ENCODE measurements at regions of chr5 and their contacts with region 1.

Region 1: DNA sequence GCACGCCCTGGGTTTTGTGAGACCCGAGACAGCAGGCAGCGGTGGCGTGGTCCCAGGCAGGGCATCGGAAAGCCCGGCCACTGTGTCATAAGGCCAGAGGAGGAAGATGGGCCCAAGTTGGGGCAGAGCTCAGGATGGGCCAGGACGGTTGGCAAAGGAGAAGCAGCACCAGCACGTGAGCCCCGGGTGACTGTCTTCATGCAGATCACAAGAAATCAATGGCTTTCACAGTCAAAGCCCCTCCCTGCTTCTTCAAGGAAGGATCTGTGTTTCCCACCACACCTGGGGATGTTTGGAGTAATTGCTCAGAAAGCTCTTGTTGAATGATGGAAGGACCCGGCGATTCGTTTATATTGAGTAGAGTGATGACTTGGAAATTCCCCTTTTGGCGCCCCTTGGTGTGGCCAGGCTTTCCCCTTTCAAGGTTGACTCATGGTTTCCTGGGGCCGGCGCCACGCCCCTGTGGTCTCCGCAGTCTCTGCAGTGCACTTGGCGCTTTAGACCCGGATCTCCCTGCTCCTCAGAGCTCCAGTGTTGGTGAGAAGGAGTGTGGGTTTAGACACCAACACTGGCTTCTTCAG is 52.1 kb downstream of the IL31RA start:
- DNase-seq: peak; percentile 70
- ATAC-seq: peak; percentile 92
- H3K4me3 ChIP-seq: peak overlapping the region; percentile 5; the same call in 1 of the 2 replicates
- H3K27ac ChIP-seq: peak overlapping the region; percentile 40
- H3K4me1 ChIP-seq: peaks cover 16% of the 10 kb centered on the region
- H3K27me3 ChIP-seq: no peaks in the 10 kb centered on the region
- CTCF ChIP-seq: no peak
- EP300 ChIP-seq: peak; percentile 62 to 69; a peak in 2 of 4 replicates
- POLR2A ChIP-seq: no peak
- RAD21 ChIP-seq: no peak

Region 2: DNA sequence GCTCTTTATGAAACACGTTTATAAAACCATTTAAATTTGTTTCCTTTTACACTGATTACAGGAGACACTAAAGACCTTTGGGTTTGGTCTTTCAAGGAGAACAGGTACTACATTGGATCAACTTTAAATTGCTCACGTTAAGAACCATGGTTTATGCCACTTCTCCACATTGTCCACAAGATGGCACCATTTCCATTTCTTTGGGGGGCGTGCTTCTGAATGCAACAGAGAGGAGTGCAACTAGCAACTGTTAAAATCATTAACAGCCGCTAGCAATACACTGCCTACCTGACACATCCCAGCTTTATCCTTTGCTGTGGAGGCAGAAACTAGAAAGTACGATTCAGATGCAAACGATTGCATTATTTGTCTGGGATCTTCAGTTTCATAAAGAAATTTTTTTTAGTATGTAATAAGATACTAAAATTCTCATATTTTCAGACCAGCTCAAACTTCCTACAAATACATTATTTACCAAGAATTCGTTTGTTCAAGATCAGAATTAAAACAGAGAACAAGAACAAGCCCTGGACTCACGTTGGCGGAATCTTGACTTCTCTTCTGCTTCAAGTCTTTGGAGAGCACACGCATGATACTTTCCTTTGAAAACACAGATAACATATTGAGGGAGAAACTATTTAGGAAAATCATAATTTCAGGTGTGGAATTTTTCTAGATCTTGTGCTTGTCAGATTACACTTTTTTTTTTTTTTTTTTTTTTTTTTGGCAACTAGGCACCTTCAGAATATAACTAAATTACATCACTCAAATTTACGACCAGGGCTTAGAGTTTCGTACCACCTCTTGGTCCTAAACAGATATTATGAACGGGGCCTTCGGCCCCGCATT is 730.9 kb before region 1 on chr5:
- CTCF ChIA-PET with region 1: no interaction called
- POLR2A ChIA-PET with region 1: no interaction called
- RAD21 ChIA-PET with region 1: no interaction called
- SMC1A ChIA-PET with region 1: no interaction called
- in situ Hi-C with region 1: no loop called
- intact Hi-C with region 1: loop called (anchors 10 kb)
- DNase-seq: peak; percentile 45
- ATAC-seq: peak; percentile 84
- H3K4me3 ChIP-seq: peak overlapping the region; percentile 69
- H3K27ac ChIP-seq: no peak overlapping the region
- H3K4me1 ChIP-seq: peaks cover 9% of the 10 kb centered on the region
- H3K27me3 ChIP-seq: peaks cover 3 to 22% of the 10 kb centered on the region in 2 experiments; a peak in 3 of 4 replicates
- CTCF ChIP-seq: peak; percentile 60 to 89 (median 82); a peak in 5 of 6 replicates
- EP300 ChIP-seq: no peak
- POLR2A ChIP-seq: no peak
- RAD21 ChIP-seq: peak; percentile 92

Region 3: DNA sequence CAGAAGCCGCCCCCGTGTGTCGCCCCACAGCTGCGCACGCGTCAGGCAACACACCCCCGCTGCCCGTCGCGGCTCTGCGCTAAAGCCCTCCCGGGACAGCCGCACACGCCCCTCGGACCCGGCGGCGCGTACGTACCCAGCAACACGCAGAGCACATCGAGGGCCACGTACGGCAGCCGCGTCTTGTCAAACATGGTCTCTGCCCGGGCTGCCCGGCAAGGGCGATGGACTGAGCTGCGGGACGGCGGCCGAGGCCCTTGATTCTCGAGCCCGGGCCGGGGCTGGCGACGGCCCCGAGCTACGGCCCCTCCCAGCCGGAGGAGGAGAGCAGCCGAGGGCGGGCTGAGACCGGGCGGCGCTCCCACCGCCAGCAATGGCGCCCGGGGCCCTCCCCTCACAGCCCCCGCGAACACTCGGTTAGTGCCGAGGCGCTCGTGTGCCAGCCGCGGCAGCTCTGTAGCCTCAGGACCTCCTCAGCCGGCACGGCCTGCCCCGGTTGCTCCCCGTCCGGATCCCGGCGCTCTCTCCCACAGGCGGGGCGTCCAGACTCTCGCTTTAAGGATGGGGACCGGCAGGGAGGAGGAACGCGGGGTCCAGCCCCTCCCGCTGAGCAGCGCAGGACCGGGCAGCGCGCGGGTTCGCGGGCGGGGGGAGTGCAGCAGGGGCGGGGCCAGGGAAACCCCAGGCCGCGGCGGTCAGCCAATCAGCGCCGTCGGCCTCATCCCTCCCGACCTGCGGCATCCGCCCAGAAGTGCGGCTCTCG is 368.6 kb before region 1 on chr5 and contains the start of gene PLPP1:
- CTCF ChIA-PET with region 1: no interaction called
- POLR2A ChIA-PET with region 1: no interaction called
- RAD21 ChIA-PET with region 1: no interaction called
- SMC1A ChIA-PET with region 1: no interaction called
- in situ Hi-C with region 1: no loop called
- intact Hi-C with region 1: loop called (anchors 10 kb)
- DNase-seq: peak; percentile 38
- ATAC-seq: peak; percentile 89
- H3K4me3 ChIP-seq: peak within 1 kb of the TSS; percentile 80
- H3K27ac ChIP-seq: peak within 1 kb of the TSS; percentile 66
- H3K4me1 ChIP-seq: peaks cover 12% of the 10 kb centered on the region
- H3K27me3 ChIP-seq: no peaks in the 10 kb centered on the region
- CTCF ChIP-seq: no peak
- EP300 ChIP-seq: no peak
- POLR2A ChIP-seq: peak; percentile 78
- RAD21 ChIP-seq: no peak
- polyA plus RNA-seq, gene PLPP1: 3.0 TPM

Region 4: GRCh38 chr5:55711968-55712859 is 191.0 kb before region 1 on chr5 and contains the start of gene SLC38A9:
- CTCF ChIA-PET with region 1: no interaction called
- POLR2A ChIA-PET with region 1: no interaction called
- RAD21 ChIA-PET with region 1: no interaction called
- SMC1A ChIA-PET with region 1: no interaction called
- in situ Hi-C with region 1: no loop called
- intact Hi-C with region 1: loop called (anchors 5 kb)
- DNase-seq: peak; percentile 68
- ATAC-seq: peak; percentile 99
- H3K4me3 ChIP-seq: peak within 1 kb of the TSS; percentile 83
- H3K27ac ChIP-seq: peak within 1 kb of the TSS; percentile 51
- H3K4me1 ChIP-seq: peaks cover 4% of the 10 kb centered on the region; the same call in 1 of the 2 replicates
- H3K27me3 ChIP-seq: no peaks in the 10 kb centered on the region
- CTCF ChIP-seq: no peak
- EP300 ChIP-seq: no peak
- POLR2A ChIP-seq: peak; percentile 80
- RAD21 ChIP-seq: no peak
- polyA plus RNA-seq, gene SLC38A9: 8.5 to 17.4 TPM

Region 5: DNA sequence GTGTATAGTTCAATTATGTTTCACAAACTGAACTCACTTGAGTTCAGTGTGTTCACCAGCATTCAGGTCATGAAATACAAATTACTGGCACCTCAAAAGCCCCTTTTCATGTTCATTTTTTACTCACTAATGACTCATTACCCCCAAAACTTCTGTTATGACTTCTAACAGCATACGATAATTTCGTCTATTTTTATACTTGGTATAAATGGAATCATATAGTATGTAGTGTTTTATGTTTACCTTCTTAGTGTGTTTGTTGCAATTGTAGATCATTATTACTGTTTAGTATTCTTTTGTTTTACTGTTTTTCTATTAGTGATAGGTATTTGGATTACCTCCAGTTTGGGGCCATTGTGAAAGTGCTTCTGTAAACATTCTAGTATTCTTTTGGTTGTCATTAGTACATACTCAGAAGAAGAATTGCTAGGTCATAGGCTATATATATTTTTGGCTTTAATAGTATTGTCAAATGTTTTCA is 132.0 kb before region 1 on chr5:
- CTCF ChIA-PET with region 1: no interaction called
- POLR2A ChIA-PET with region 1: interaction called, 4 read pairs
- RAD21 ChIA-PET with region 1: interaction called, 4 read pairs
- SMC1A ChIA-PET with region 1: no interaction called
- in situ Hi-C with region 1: no loop called
- intact Hi-C with region 1: loop called (anchors 5 kb)
- DNase-seq: no peak
- ATAC-seq: peak; percentile 88
- H3K4me3 ChIP-seq: no peak overlapping the region
- H3K27ac ChIP-seq: no peak overlapping the region
- H3K4me1 ChIP-seq: peaks cover 3% of the 10 kb centered on the region; the same call in 1 of the 2 replicates
- H3K27me3 ChIP-seq: no peaks in the 10 kb centered on the region
- CTCF ChIP-seq: no peak
- EP300 ChIP-seq: peak; percentile 35 to 53; a peak in 2 of 4 replicates
- POLR2A ChIP-seq: no peak
- RAD21 ChIP-seq: no peak

Region 6: GRCh38 chr5:55913466-55914413 is 10.5 kb after region 1 on chr5:
- CTCF ChIA-PET with region 1: interaction called, 7 read pairs
- POLR2A ChIA-PET with region 1: interaction called, 13 read pairs
- RAD21 ChIA-PET with region 1: interaction called, 24 read pairs
- SMC1A ChIA-PET with region 1: interaction called, 41 read pairs
- in situ Hi-C with region 1: no loop called
- intact Hi-C with region 1: no loop called
- DNase-seq: no peak
- ATAC-seq: peak; percentile 95
- H3K4me3 ChIP-seq: no peak overlapping the region
- H3K27ac ChIP-seq: no peak overlapping the region
- H3K4me1 ChIP-seq: no peaks in the 10 kb centered on the region
- H3K27me3 ChIP-seq: 0 out of 4 replicates have a peak, but pooled peaks cover 0 to 2% of the 10 kb centered on the region in 2 experiments
- CTCF ChIP-seq: no peak
- EP300 ChIP-seq: peak in 1 of 2 experiments; percentile 63; a peak in 3 of 4 replicates
- POLR2A ChIP-seq: no peak
- RAD21 ChIP-seq: no peak

Region 7: DNA sequence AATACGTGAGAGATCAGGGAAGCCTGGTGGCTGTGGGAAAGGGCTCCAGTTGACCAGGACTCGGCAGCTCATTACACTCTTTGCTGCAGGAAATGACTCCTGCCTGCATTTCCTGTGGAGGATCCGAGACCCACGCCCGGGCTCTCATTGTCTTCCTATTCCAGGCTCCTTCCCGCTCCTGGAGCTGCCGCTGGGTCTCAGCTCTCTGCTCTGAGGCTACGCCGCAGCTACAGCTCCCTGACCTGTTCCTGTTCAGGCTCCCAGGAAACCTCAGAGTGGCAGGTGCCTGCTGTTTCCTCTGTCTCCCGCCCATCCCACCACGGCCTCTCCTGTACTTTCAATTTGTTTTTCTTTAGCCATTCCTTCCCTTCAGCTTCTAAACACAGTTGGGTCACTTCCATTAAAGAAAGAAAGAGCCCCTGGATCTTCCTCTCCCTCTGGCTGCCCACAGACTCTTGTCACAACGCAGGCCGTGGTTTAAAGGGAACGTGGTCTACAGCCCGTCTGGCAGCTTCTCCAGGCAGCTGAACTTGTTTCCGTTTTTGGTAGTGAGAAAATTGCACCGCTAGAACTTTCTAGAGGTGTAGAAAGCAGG is 20.1 kb after region 1 on chr5:
- CTCF ChIA-PET with region 1: interaction called, 4 read pairs
- POLR2A ChIA-PET with region 1: interaction called, 5 read pairs
- RAD21 ChIA-PET with region 1: interaction called, 5 read pairs
- SMC1A ChIA-PET with region 1: interaction called, 10 read pairs
- in situ Hi-C with region 1: no loop called
- intact Hi-C with region 1: no loop called
- DNase-seq: no peak
- ATAC-seq: peak; percentile 40
- H3K4me3 ChIP-seq: peak overlapping the region; percentile 49; the same call in 1 of the 2 replicates
- H3K27ac ChIP-seq: peak overlapping the region; percentile 15; the same call in 1 of the 2 replicates
- H3K4me1 ChIP-seq: peaks cover 17% of the 10 kb centered on the region
- H3K27me3 ChIP-seq: no peaks in the 10 kb centered on the region
- CTCF ChIP-seq: no peak
- EP300 ChIP-seq: no peak
- POLR2A ChIP-seq: no peak
- RAD21 ChIP-seq: no peak

Region 8: DNA sequence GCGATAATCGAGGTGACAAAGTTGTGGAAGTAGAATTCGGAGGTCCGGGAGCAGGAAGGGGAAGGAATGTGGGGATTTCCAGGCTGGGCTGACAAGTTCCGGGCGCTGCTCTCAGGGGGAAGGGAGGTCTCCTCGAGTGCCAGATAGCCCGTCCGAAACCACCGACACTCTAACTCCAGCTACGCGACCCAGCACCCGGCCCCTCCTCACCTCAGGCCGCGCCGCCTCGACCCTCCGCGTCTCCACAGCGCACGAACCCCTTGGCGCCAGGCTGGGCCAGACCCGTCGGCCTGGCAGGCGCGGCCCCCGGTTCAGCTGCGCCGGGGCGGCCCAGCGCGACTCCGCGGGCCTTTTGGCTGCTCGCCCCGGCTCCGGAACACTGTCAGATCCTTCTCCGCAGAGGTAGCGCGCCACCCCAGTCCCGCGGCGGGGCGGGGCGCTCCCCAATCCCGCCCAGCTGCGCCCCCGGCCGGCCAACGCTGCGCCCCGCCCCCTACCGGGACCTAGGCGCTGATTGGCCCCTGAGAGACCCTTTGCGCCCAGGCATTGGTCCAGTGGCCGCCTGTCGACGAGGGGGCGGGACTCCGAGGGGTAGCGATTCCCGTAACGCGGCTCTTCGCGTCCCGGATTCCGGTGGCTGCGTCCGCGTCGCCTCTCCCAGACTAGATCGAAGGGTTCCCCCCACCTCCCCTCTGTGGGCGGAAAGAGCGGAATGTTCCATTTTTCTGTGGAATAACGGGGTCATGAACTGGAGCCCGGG is 91.5 kb after region 1 on chr5 and contains the start of gene IL6ST:
- CTCF ChIA-PET with region 1: no interaction called
- POLR2A ChIA-PET with region 1: no interaction called
- RAD21 ChIA-PET with region 1: no interaction called
- SMC1A ChIA-PET with region 1: no interaction called
- in situ Hi-C with region 1: no loop called
- intact Hi-C with region 1: no loop called
- DNase-seq: peak; percentile 78
- ATAC-seq: peak; percentile 91
- H3K4me3 ChIP-seq: peak within 1 kb of the TSS; percentile 93
- H3K27ac ChIP-seq: peak within 1 kb of the TSS; percentile 93
- H3K4me1 ChIP-seq: no peaks in the 10 kb centered on the region; the same call in none of the 2 replicates
- H3K27me3 ChIP-seq: no peaks in the 10 kb centered on the region
- CTCF ChIP-seq: peak in 1 of 3 experiments; percentile 19; a peak in 1 of 6 replicates
- EP300 ChIP-seq: no peak
- POLR2A ChIP-seq: peak; percentile 88
- RAD21 ChIP-seq: no peak
- polyA plus RNA-seq, gene IL6ST: 1.5 to 1.8 TPM

Measured in GM12878 (cell line).